Left ventricle myocardium inferior (tissue), 1 donor: ENCODE measurements at regions of chr11 and their contacts with region 1.

Region 1: GRCh38 chr11:128164080-128164741 is 423.1 kb downstream of the ETS1 start:
- DNase-seq: no peak
- H3K4me3 ChIP-seq: no peak overlapping the region
- H3K27ac ChIP-seq: no peak overlapping the region
- H3K4me1 ChIP-seq: no peaks in the 10 kb centered on the region
- H3K27me3 ChIP-seq: peaks cover 19% of the 10 kb centered on the region
- CTCF ChIP-seq: no peak

Region 2: DNA sequence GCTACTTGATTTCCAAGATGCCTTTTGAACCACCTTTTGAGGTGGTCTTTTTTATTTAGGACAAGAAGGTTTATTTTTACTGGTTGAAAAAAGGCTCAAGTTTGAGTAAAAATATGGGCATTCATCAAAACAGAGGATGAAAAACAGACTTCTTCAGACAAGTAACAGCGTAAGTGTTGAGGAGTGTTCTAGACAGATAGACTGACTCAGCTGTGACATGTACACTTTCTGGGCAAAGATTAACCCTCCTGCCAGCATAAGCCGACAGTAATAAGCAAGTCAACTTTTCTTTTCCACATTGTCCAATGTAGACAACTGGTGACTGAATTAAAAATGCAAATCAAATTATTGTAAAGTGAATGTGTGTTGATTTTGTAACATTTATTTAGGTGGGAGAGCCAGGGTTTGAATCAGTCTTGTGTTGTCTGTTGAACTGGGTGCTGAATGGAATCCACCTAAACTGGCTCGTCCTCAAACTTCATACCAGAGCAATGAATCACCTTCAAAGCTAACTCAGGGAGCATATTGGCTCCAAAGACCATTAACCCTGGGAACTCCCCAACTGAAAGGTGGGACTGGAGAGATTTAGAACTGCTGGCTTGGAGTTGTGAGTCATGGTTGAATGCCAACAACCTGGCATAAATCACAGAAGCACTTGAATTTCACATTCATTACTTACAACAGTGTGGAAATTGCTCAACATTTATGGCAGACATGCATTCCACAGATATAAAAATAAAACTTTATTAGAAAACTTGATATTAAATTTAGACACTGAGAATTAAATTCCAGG is 46.1 kb after region 1 on chr11:
- intact Hi-C with region 1: no loop called
- DNase-seq: no peak
- H3K4me3 ChIP-seq: no peak overlapping the region
- H3K27ac ChIP-seq: peak overlapping the region; percentile 36
- H3K4me1 ChIP-seq: peaks cover 36% of the 10 kb centered on the region
- H3K27me3 ChIP-seq: no peaks in the 10 kb centered on the region
- CTCF ChIP-seq: no peak

Region 3: DNA sequence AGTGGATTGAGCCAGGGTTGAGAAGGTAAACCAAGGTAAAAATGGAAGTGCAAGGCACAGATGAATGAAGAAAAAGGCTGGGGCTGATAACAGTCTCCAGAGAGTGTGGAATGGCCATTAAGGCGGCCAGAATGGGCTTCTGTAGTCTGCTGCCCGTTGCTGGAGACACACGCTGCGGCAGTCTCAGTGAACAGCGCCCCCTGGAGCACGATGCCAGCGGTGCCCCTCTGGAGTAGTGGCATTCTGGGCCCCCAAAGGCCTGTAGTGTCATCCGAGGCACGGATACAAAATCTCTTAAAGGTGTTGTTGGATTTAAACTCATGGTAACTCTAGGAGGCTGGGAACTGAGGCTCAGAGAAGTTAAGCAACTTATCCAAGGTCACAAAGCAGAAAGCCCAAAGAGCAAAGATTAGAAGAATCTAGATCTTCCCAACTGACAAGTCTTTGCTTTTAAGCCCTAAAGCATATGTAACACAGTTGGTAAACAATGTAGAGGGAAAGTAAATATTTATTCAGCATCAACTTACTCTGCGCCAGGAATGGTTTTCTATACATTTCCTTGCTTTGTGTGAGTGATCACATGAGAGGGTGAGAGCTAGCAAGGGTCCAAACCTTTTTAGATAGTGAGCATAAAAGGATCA is 684.7 kb after region 1 on chr11:
- intact Hi-C with region 1: loop called (anchors 10 kb)
- DNase-seq: peak; percentile 51
- H3K4me3 ChIP-seq: no peak overlapping the region
- H3K27ac ChIP-seq: no peak overlapping the region
- H3K4me1 ChIP-seq: peaks cover 17% of the 10 kb centered on the region
- H3K27me3 ChIP-seq: no peaks in the 10 kb centered on the region
- CTCF ChIP-seq: peak; percentile 75